Activated naive CD8-positive, alpha-beta T cell treated with anti-CD3 and anti-CD28 coated beads, Interleukin-2, amount 10 ng/mL, durations not matched to agents 7 days and 5 days (primary cell): ENCODE measurements at regions of chr6 and their contacts with region 1.

Region 1: GRCh38 chr6:159761873-159762680 is at the start of gene ACAT2:
- DNase-seq: peak; percentile 94
- ATAC-seq: peak; percentile 97
- H3K4me3 Mint-ChIP-seq: peak within 1 kb of the TSS; percentile 99
- H3K27ac Mint-ChIP-seq: peak within 1 kb of the TSS; percentile 95
- H3K4me1 Mint-ChIP-seq: peaks cover 27% of the 10 kb centered on the region
- H3K27me3 Mint-ChIP-seq: no peaks in the 10 kb centered on the region
- total RNA-seq, gene ACAT2: 55.3 to 57.1 TPM

Region 2: GRCh38 chr6:159693128-159693893 is 68.8 kb before region 1 on chr6 and contains the start of gene SOD2:
- POLR2A ChIA-PET with region 1: interaction called, 14 read pairs
- DNase-seq: peak; percentile 90
- ATAC-seq: peak; percentile 77
- H3K4me3 Mint-ChIP-seq: peak within 1 kb of the TSS; percentile 94
- H3K27ac Mint-ChIP-seq: peak within 1 kb of the TSS; percentile 93
- H3K4me1 Mint-ChIP-seq: peaks cover 36% of the 10 kb centered on the region
- H3K27me3 Mint-ChIP-seq: no peaks in the 10 kb centered on the region
- total RNA-seq, gene SOD2: 68.4 to 72.1 TPM

Region 3: DNA sequence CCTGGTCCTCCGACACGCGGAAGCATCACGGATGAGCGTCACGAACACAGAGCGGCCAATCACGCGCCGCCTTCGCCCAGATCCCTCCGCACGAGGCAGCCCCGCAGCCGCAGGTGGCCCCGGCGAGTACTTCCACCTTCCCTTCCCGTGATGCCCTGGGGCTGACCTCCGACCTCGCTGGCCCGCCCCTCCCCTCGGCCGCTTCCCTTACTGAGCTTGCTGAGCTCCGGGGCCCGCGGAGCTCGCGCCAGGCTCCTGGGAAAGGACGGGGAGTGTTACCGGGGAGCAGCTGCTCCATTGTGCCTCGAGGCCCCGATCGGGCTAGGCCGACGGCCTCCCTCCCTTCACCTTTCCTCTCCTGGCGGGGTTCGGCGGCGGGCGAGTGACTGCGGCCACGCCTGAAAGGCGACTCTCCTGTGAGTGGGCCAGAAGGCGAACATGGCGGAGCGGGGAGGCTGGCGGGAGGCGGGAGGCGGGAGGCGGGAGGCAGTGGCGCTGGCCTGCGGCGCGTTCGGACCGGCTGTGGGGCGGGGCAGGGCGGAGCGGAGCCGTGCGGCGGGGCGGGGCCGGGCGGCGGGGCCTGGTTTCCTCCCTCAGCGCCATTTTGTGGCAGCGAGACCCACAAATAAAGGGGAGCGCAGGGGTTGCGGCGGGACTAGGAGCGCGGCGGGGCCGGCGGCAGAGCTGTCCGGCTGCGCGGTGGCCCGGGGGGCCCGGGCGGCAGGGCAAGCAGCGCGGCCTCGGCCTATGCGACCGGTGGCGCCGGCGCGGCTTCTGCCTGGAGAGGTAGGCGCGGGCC is 35.0 kb before region 1 on chr6 and contains the start of gene WTAP:
- POLR2A ChIA-PET with region 1: interaction called, 43 read pairs
- DNase-seq: peak; percentile 95
- ATAC-seq: peak; percentile 78
- H3K4me3 Mint-ChIP-seq: peak within 1 kb of the TSS; percentile 94
- H3K27ac Mint-ChIP-seq: peak within 1 kb of the TSS; percentile 98
- H3K4me1 Mint-ChIP-seq: peaks cover 32% of the 10 kb centered on the region
- H3K27me3 Mint-ChIP-seq: no peaks in the 10 kb centered on the region
- total RNA-seq, gene WTAP: 127 to 129 TPM

Region 4: DNA sequence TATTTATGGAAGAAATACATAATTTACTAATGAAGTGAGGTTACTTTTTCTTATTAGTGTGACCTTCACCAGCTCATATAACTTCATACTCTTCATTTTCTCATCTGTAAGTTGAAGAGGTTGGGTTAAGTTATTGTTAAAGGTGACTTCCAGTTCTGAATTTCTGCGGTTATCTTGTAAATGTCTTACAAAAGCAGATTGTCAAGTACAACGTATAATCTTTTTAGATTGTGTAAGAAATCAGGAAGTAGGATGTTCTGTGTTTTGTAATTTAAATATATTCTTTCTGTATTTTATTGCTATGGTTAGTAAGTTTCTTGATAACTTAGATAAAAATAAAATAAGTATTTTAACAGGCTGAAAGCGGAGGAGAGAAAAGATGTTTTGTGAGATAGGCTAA is 22.7 kb before region 1 on chr6:
- POLR2A ChIA-PET with region 1: no interaction called
- DNase-seq: no peak
- ATAC-seq: no peak
- H3K4me3 Mint-ChIP-seq: no peak overlapping the region
- H3K27ac Mint-ChIP-seq: no peak overlapping the region
- H3K4me1 Mint-ChIP-seq: peaks cover 14% of the 10 kb centered on the region
- H3K27me3 Mint-ChIP-seq: no peaks in the 10 kb centered on the region

Region 5: GRCh38 chr6:159777240-159777904 is 15.3 kb after region 1 on chr6:
- POLR2A ChIA-PET with region 1: interaction called, 12 read pairs
- DNase-seq: no peak
- ATAC-seq: peak; percentile 20
- H3K4me3 Mint-ChIP-seq: no peak overlapping the region
- H3K27ac Mint-ChIP-seq: no peak overlapping the region
- H3K4me1 Mint-ChIP-seq: peaks cover 14% of the 10 kb centered on the region
- H3K27me3 Mint-ChIP-seq: no peaks in the 10 kb centered on the region